PC-9 (cell line): ENCODE measurements at regions of chrX and their contacts with region 1.

Region 1: DNA sequence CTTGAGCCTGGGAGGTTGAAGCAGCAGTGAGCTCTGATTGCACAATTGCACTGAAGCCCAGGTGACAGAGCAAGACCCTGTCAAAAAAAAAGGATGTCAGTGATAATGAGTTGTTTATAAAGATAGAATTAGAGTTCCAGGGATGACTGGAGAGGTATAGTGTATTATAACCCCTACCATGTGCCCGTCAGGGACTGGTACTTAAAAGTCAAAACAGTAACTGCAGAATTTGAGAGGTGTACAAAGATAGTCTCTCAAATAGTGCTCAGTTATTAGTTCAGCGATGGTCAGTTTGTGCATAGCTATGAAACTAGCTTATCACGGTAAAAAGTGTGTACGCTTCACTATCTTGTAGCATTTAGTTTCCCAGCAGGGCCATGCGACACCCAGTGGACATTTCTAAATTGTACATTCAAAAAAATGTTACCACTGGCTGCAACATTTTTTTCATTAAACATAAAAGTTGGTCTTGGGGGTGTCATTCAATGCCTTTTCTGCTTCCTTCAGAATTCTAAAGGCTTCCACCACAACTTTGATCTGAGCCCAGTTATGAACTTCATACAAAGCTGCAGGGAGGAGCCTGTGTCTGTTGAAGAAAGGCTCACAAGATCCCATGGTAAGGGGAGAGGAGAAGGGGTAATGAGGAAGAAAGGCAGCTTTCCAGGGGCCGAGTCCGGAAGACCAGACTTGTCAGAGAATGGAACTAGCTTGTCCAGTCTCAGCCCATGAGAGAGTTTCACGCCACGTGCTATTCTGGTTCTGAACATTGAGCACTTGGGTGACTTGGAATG is 9.2 kb upstream of the GYG2 start:
- DNase-seq: peak in 1 of 2 experiments; percentile 23
- H3K4me3 ChIP-seq: no peak overlapping the region
- H3K27ac ChIP-seq: no peak overlapping the region
- H3K4me1 ChIP-seq: no peaks in the 10 kb centered on the region
- H3K27me3 ChIP-seq: no peaks in the 10 kb centered on the region
- CTCF ChIP-seq: peak; percentile 74

Region 2: DNA sequence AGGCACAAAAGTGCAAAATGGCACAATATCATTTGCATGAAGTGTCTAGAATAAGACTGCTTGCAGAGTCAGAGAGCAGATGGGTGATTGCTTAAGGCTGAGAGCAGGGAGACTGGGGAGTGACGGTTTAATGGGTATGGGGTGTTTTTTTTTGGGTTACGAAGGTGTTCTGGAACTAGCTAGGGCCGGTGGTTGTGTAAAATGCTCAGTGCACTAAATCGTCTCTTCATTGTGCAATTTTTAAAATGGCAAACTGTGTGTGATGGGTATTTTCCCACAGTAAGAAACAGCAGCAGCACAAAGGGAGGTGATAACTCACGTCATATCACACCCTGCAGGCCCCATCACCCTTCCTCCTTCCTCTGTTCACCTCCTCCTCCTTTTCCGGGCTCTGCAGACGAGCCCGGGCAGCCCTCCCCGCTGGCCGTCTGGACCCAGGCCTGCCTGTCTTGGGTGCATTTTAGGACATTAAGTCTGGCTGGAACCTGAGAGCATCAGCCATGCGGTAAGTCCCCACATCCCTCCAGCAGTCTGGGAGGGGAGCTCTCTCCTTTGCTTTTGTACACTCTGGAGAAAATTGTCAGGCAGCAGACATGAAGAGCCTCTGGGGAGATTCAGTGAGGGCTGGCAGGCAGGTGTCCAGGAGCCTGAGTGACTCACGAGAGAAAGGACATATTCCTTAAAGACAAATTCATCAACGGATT is 1162.0 kb before region 1 on chrX:
- CTCF ChIA-PET with region 1: no interaction called
- POLR2A ChIA-PET with region 1: no interaction called
- intact Hi-C with region 1: loop called (anchors 10 kb)
- DNase-seq: no peak
- H3K4me3 ChIP-seq: no peak overlapping the region
- H3K27ac ChIP-seq: no peak overlapping the region
- H3K4me1 ChIP-seq: no peaks in the 10 kb centered on the region
- H3K27me3 ChIP-seq: peaks cover 28% of the 10 kb centered on the region
- CTCF ChIP-seq: no peak

Region 3: DNA sequence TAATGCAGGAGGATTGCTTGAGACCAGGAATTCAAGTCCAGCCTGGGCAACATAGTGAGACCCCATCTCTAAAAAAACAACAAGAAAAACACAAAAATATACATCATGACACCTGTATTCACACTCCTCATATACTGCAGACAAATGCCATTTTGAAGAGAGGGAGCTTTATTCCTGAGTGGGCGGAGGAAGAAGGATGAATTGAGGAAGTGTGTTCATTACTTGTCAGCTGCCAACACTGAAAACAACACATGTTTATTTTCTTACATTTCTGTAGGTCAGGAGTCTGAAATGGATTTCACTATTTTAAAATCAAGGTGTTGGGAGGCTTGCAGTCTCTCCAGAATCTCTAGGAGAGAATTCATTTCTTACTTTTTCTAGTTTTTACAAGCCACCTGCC is 175.7 kb before region 1 on chrX:
- CTCF ChIA-PET with region 1: no interaction called
- POLR2A ChIA-PET with region 1: no interaction called
- intact Hi-C with region 1: loop called (anchors 2 kb)
- DNase-seq: no peak
- H3K4me3 ChIP-seq: no peak overlapping the region
- H3K27ac ChIP-seq: no peak overlapping the region
- H3K4me1 ChIP-seq: no peaks in the 10 kb centered on the region
- H3K27me3 ChIP-seq: no peaks in the 10 kb centered on the region
- CTCF ChIP-seq: no peak

Region 4: GRCh38 chrX:2863629-2864028 is 44.1 kb after region 1 on chrX:
- CTCF ChIA-PET with region 1: no interaction called
- POLR2A ChIA-PET with region 1: no interaction called
- intact Hi-C with region 1: no loop called
- DNase-seq: no peak
- H3K4me3 ChIP-seq: no peak overlapping the region
- H3K27ac ChIP-seq: no peak overlapping the region
- H3K4me1 ChIP-seq: no peaks in the 10 kb centered on the region
- H3K27me3 ChIP-seq: peaks cover 32% of the 10 kb centered on the region
- CTCF ChIP-seq: no peak